Dendritic cell treated with granulocyte-macrophage colony-stimulating factor and Interleukin-4, amounts not matched to agents 40 ng/mL and 50 ng/mL, for 4 days (primary cell): ENCODE measurements at regions of chr12 and their contacts with region 1.

Region 1: DNA sequence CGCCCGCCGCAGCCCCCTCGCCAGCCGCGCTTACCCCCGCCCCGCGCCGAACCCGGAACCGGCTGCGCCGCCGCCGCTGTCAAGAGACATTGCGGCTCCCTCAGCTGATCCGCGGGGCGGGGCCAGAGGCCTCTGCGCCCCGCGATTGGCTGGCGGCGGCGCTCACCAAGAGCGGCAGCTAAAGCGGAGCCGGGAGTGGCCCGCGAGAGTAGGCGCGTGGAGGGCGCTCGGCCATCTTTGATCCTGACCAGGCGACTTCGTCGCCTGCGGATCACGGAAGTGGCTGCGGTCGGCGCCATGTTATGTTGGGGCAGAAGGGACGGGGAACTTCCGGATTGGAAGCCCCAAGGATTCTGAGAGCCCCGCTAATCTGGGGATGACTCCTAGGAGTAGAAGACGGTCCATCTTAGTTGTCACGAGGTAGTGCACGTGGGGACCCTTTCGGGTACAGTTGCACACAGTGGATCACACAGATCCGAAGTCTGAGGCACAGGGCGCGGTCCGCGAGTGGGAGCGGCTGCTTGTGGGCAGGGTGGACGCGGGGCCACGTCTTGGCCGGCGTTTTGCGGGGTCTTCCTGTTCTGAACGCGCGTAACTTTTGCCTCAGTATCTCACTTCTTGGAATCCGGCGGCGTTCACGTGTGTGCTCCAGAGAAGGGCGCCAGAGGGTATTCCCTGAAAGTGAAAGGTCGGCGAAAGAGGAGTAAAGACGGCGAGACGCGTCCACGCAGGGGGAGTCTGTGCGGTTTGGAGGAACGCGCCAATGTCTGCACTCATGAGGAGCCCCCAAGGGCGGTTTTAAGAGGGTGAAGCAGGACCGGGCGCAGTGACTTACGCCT is at the start of gene CHFR:
- H3K4me3 Mint-ChIP-seq: peak within 1 kb of the TSS; percentile 91
- H3K27ac Mint-ChIP-seq: peak within 1 kb of the TSS; percentile 100
- H3K4me1 Mint-ChIP-seq: peaks cover 19% of the 10 kb centered on the region
- H3K27me3 Mint-ChIP-seq: peaks cover 15% of the 10 kb centered on the region

Region 2: DNA sequence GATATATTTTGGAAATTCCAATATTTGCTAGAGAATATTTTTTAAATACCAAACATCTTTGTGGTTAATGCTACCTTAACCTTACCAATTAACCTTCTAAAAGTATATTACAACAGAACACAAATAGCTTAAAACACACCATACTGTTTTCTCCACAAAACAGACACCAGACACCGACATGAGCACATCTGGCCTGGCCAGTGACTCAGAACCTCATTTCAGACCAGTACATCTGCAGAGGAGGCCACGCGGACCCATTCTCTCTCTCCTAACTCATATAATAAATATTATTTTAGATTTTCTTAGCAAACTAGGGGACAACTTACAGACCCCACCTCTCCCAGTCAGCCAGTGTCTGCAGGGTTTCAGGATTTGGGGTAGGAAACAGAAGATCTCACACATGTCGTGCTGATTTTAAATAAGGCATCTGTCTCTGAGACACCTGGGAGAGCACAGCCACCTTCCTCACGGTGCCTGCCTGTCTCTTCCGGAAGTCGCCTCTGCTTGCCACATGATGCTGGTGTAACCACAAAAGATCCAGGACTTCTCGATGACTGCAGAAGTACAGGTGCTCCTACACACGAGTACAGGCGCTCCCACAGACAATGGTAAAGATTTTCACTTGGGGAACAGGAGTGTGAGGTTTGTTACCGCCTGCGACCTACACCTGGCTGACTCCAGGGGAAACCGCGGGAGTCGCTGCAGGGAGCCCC is 116.5 kb before region 1 on chr12:
- intact Hi-C with region 1: loop called (anchors 5 kb)
- H3K4me3 Mint-ChIP-seq: peak overlapping the region; percentile 31
- H3K27ac Mint-ChIP-seq: peak overlapping the region; percentile 99
- H3K4me1 Mint-ChIP-seq: peaks cover 69% of the 10 kb centered on the region
- H3K27me3 Mint-ChIP-seq: no peaks in the 10 kb centered on the region

Region 3: GRCh38 chr12:132828706-132829534 is 58.8 kb before region 1 on chr12 and contains the start of gene GOLGA3:
- intact Hi-C with region 1: loop called (anchors 2 kb)
- H3K4me3 Mint-ChIP-seq: peak within 1 kb of the TSS; percentile 95
- H3K27ac Mint-ChIP-seq: peak within 1 kb of the TSS; percentile 99
- H3K4me1 Mint-ChIP-seq: peaks cover 43% of the 10 kb centered on the region
- H3K27me3 Mint-ChIP-seq: no peaks in the 10 kb centered on the region

Region 4: GRCh38 chr12:132925597-132926416 is 38.1 kb after region 1 on chr12:
- intact Hi-C with region 1: no loop called
- H3K4me3 Mint-ChIP-seq: no peak overlapping the region
- H3K27ac Mint-ChIP-seq: no peak overlapping the region
- H3K4me1 Mint-ChIP-seq: no peaks in the 10 kb centered on the region
- H3K27me3 Mint-ChIP-seq: no peaks in the 10 kb centered on the region

Region 5: GRCh38 chr12:132940071-132940719 is 52.5 kb after region 1 on chr12:
- intact Hi-C with region 1: no loop called
- H3K4me3 Mint-ChIP-seq: no peak overlapping the region
- H3K27ac Mint-ChIP-seq: no peak overlapping the region
- H3K4me1 Mint-ChIP-seq: no peaks in the 10 kb centered on the region
- H3K27me3 Mint-ChIP-seq: no peaks in the 10 kb centered on the region

Region 6: DNA sequence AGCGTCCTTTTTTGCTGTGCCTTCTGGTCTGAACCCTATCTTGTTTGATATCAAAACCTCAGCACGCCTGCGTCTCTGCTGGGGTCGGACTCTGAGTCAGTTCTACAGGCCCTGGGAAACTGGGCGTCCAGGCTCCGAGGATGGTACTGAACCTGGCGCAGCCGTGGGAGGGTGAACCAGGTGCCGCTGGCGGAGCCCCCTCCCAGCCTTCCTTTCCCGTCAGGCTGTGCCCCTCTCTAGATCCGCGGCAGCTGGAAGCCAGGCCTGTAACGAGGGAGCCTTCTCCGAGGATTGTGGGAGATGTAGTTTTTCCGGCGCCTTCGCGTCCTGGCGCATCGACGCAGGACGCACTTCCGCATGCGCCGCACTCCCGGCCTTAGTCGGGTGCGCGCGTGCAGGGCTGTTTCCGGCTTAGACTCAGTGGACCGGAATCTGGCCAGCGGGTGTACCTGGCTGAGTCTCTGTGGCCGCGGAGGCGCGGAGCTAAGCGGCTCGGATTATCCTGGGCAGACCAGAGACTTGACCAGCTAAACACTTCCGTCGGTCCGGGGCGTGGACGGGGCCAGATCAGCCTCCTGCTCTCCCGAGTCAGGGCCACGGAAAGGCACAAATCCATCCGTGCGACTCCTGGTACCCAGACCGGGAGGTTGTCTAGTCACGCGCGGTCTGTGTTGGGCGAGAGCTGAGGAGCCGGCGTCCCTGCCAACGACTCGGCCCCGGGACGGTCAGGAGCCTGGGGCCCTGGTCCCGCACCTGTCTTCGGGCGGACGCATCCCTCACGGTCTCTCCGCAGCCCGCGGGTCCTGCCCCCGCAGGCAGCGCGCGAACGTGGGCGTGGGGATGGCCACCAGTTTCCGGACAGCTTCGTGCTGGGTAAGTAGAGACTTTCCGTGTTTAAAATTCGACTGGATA is 98.5 kb after region 1 on chr12 and contains the start of gene ZNF26:
- intact Hi-C with region 1: loop called (anchors 1 kb)
- H3K4me3 Mint-ChIP-seq: peak within 1 kb of the TSS; percentile 89
- H3K27ac Mint-ChIP-seq: peak within 1 kb of the TSS; percentile 95
- H3K4me1 Mint-ChIP-seq: peaks cover 16% of the 10 kb centered on the region
- H3K27me3 Mint-ChIP-seq: no peaks in the 10 kb centered on the region

Region 7: DNA sequence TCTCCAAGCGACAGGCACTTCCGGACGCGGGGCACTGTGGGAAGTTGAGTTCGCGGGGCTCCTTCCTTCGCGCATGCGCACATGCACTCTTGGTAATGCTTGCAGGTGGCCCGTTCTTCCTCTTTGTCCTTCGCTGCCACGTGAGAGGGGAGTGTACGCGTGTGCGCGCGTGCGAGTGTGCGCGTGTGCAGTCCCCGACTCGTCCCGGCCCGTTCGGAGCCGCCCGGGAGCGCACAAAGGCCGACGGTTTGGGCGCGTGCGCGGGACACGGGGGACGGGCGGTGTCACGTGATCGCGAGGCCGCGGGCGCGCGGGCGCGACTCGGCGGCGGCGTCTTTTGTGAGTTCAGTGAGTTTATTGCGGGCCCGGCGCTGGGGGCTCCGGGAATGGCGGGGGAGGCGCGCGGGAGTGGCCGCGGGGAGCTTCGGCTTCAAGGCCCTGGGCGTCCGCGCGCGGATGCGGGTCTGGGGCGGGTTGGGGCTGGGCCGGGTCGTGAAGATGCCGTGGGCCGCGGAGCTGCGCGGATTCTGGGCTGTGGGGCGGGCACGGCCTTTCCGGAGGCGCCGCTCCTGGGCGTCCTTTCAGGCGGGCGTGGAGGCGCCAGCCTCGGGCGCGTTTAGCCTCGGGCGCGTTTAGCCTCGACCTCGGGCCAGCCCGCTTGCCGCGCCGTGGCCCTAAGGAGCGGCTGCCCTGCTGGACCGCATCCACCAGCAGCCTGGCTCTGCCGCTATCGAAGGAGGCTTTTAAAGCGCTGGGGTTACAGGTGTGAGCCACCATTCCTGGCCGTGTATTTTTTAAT is 149.7 kb after region 1 on chr12 and contains the start of gene ZNF84:
- intact Hi-C with region 1: loop called (anchors 2 kb)
- H3K4me3 Mint-ChIP-seq: peak within 1 kb of the TSS; percentile 90
- H3K27ac Mint-ChIP-seq: peak within 1 kb of the TSS; percentile 95
- H3K4me1 Mint-ChIP-seq: peaks cover 6% of the 10 kb centered on the region
- H3K27me3 Mint-ChIP-seq: no peaks in the 10 kb centered on the region